ENCODE measurements at regions of chr11 and their contacts with region 1.

Region 1: DNA sequence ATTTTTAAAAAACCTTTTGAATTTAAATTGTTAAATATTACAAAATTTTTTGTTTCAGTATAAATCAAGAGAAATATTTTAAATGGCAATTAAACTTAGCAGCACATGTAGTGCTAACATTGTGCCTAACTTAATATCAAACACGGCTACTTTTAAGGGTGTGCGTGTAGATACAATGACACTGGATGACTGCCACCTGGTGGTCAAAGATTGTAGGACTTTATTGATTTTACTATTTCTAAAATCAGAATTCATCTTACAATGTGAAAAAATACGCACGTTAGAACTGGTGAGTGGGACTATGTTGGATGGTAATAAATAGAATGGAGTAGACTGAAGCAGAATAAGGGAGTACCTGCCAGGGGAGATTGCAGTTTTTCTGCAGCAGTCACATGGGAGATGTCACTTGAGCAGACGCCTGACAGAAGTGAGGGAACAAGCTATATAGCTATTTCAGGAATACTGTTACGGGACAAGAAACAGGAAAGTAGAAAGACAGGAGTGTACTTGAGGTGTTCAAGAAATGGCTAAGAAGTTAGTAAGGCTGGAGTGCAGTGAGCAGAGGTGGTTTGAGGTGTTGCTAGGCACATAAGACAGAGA is 52.9 kb downstream of the UVRAG start:
- DNase-seq: no peak
- ATAC-seq: peak; percentile 68

Region 2: GRCh38 chr11:75547580-75548058 is 320.3 kb before region 1 on chr11:
- intact Hi-C with region 1: loop called (anchors 5 kb)
- DNase-seq: peak; percentile 79
- ATAC-seq: peak; percentile 88

Region 3: DNA sequence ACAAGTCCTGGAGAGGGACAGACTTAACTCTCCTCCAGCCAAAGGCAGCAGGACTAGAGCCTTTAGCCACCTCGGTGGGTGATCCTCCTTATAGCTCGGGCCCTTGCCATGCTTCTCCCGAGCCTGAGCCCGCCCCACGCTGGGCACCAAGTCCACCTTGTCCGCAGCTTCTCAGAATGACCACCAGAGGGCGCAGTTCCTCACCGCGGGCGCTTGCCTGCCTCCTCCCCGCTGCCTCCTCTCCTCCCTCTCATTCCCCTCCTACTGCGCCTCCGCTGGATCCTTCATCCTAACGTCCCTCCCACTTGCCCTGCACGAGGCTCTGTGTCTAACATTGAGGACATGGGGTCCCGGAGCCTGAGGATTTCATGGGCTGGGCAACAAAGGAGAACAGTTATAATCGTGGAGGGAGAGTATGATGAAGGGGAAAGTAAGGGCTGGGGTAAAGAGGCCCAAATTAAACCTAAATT is 161.6 kb before region 1 on chr11:
- intact Hi-C with region 1: loop called (anchors 5 kb)
- DNase-seq: peak; percentile 89
- ATAC-seq: peak; percentile 91

Region 4: DNA sequence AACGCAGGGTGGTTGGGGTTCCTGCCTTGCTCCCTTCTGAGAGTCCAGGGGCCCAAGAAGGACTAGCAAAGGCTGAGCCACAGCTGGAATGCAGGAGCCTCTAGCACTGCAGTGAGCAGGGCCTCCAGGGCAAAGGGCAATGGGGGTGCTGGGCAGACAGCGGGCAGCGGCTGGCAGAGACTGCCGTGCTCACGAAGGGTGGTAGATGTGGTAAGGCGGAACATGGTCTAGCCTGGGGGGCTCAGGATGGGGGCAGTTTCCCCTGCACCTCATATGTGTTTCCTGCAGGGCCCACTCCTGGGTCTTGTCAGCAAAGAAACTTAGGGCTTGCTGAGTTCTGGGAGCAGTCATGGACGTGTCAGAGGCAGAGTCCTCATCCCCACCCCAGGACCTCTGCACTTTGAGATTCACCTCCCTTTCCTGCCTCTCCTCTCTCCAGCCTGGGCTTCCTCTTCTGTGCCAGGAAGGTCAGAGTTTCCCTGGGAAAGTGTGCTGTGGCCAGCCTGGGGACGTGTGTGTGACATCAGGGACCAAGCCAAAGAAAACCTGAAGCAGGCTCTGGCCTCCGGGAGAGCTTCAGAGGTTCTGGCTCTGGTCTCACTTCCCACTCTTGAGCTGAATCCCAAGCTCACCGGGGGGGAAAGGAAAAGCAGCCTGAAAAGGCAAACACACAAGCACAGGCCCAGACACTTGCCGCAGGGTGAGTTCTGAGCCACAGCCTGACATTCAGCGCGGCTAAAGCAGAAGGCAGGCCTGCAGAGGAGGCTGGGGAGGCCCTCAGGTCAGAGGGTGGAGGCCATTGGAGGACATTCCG is 145.8 kb before region 1 on chr11:
- intact Hi-C with region 1: loop called (anchors 5 kb)
- DNase-seq: peak; percentile 58
- ATAC-seq: no peak

Region 5: DNA sequence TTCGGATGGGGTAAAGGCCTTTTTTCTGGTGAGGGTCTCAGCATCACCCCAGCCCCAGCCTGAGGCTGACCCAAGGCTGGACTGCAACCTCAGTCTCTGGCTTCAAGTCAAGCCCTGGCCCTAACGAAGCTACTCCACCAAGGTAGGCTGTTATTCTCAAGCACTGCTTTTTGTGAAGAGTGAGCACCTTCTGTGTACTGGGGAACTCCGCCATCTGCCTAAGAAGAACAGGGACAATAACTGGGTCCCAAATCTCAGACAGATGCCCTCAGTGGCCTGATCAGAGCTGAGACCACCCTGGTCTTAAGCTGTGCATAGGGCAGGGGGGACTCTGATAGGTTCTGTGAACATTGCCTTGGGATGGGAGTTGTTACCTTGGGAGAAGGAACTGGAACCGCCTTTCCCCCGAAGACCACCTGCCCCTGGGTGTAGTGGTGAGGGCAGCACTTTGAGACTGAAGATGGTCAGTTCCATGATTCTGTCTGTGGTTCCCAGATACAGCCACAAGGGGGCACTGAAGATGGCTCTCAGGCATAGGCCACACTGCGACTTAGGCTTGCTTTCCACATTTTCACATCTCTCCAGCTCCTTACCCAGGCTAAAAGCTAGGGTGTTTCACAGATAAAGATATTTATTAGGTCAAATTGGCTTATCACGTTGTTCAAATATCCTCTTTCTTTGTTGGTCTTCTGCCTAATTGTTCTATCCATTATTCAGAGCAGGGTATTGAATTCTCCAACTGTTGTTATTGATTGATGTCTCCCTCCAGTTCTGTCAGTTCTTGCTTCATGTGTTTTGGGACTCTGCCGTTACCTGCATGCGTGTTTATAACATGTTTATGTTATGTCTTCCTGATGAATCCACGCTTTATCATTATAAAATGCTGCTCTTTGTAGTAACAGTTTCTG is 64.7 kb before region 1 on chr11:
- intact Hi-C with region 1: loop called (anchors 1 kb)
- DNase-seq: no peak
- ATAC-seq: peak; percentile 83

Measured in Right ventricle myocardium inferior (tissue), 1 donor.